HCT116 (cell line): ENCODE measurements at regions of chr2 and their contacts with region 1.

Region 1: GRCh38 chr2:203155406-203155805 is 83.4 kb upstream of the CYP20A1 start:
- DNase-seq: peak; percentile 3
- ATAC-seq: peak; percentile 84
- H3K4me3 ChIP-seq: no peak overlapping the region
- H3K27ac ChIP-seq: no peak overlapping the region
- H3K4me1 ChIP-seq: no peaks in the 10 kb centered on the region
- H3K27me3 ChIP-seq: no peaks in the 10 kb centered on the region
- CTCF ChIP-seq: peak; percentile 11 to 41 (median 29); a peak in 4 of 6 replicates
- POLR2A ChIP-seq: no peak
- RAD21 ChIP-seq: peak; percentile 59

Region 2: GRCh38 chr2:202831242-202832220 is 323.9 kb before region 1 on chr2:
- CTCF ChIA-PET with region 1: interaction called, 3 read pairs
- POLR2A ChIA-PET with region 1: no interaction called
- RAD21 ChIA-PET with region 1: no interaction called
- intact Hi-C with region 1: loop called (anchors 5 kb)
- DNase-seq: peak; percentile 61
- ATAC-seq: peak; percentile 98
- H3K4me3 ChIP-seq: peak overlapping the region in 1 of 2 experiments; percentile 9; a peak in 1 of 4 replicates
- H3K27ac ChIP-seq: no peak overlapping the region
- H3K4me1 ChIP-seq: peaks cover 3 to 10% of the 10 kb centered on the region in 2 experiments; a peak in 3 of 4 replicates
- H3K27me3 ChIP-seq: no peaks in the 10 kb centered on the region
- CTCF ChIP-seq: peak; percentile 79 to 89 (median 82)
- POLR2A ChIP-seq: no peak
- RAD21 ChIP-seq: peak; percentile 96

Region 3: GRCh38 chr2:203276114-203276513 is 120.7 kb after region 1 on chr2:
- CTCF ChIA-PET with region 1: no interaction called
- POLR2A ChIA-PET with region 1: no interaction called
- RAD21 ChIA-PET with region 1: no interaction called
- intact Hi-C with region 1: no loop called
- DNase-seq: no peak
- ATAC-seq: no peak
- H3K4me3 ChIP-seq: no peak overlapping the region
- H3K27ac ChIP-seq: no peak overlapping the region
- H3K4me1 ChIP-seq: peaks cover 19 to 20% of the 10 kb centered on the region in 2 experiments
- H3K27me3 ChIP-seq: no peaks in the 10 kb centered on the region
- CTCF ChIP-seq: no peak
- POLR2A ChIP-seq: no peak
- RAD21 ChIP-seq: no peak